ENCODE measurements at regions of chr9 and their contacts with region 1.

Region 1: GRCh38 chr9:19174127-19174912 is 47.0 kb upstream of the PLIN2 start:
- DNase-seq: peak; percentile 64
- ATAC-seq: peak; percentile 99
- H3K4me3 ChIP-seq: no peak overlapping the region
- H3K27ac ChIP-seq: no peak overlapping the region
- H3K4me1 ChIP-seq: no peaks in the 10 kb centered on the region
- H3K27me3 ChIP-seq: no peaks in the 10 kb centered on the region
- CTCF ChIP-seq: peak; percentile 50 to 66 (median 51); a peak in 5 of 6 replicates
- EP300 ChIP-seq: no peak
- POLR2A ChIP-seq: no peak
- RAD21 ChIP-seq: peak; percentile 77

Region 2: GRCh38 chr9:18255158-18255629 is 919.1 kb before region 1 on chr9:
- CTCF ChIA-PET with region 1: interaction called, 5 read pairs
- POLR2A ChIA-PET with region 1: no interaction called
- RAD21 ChIA-PET with region 1: interaction called, 4 read pairs
- SMC1A ChIA-PET with region 1: interaction called, 13 read pairs
- in situ Hi-C with region 1: loop called (anchors 25 kb)
- intact Hi-C with region 1: loop called (anchors 10 kb)
- DNase-seq: peak; percentile 9
- ATAC-seq: peak; percentile 96
- H3K4me3 ChIP-seq: no peak overlapping the region
- H3K27ac ChIP-seq: no peak overlapping the region
- H3K4me1 ChIP-seq: no peaks in the 10 kb centered on the region
- H3K27me3 ChIP-seq: no peaks in the 10 kb centered on the region
- CTCF ChIP-seq: peak; percentile 80 to 92 (median 88)
- EP300 ChIP-seq: no peak
- POLR2A ChIP-seq: no peak
- RAD21 ChIP-seq: peak; percentile 96

Region 3: DNA sequence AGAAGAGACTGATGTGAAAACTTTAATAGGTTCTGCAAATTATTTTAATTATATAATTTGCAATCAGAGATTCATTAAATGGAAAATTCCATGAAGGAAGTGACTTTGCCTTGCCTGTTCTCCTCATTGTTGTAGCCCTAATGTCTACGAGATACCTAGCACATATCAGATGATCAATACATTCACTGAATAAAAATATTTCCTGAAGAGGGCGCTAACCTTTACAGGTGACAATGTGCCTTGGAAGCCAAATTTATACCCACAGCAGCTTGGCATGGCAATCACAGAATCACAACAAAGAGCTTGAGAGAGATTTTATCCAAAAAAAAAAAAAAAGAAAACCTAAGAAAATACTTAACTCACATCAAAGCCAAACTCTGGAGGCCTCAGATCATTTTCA is 89.0 kb before region 1 on chr9:
- CTCF ChIA-PET with region 1: interaction called, 113 read pairs
- POLR2A ChIA-PET with region 1: interaction called, 9 read pairs
- RAD21 ChIA-PET with region 1: interaction called, 71 read pairs
- SMC1A ChIA-PET with region 1: interaction called, 61 read pairs
- in situ Hi-C with region 1: loop called (anchors 10 kb)
- intact Hi-C with region 1: loop called (anchors 1 kb)
- DNase-seq: no peak
- ATAC-seq: peak; percentile 88
- H3K4me3 ChIP-seq: no peak overlapping the region
- H3K27ac ChIP-seq: no peak overlapping the region
- H3K4me1 ChIP-seq: no peaks in the 10 kb centered on the region
- H3K27me3 ChIP-seq: no peaks in the 10 kb centered on the region
- CTCF ChIP-seq: peak; percentile 33 to 47 (median 35); a peak in 3 of 6 replicates
- EP300 ChIP-seq: no peak
- POLR2A ChIP-seq: no peak
- RAD21 ChIP-seq: peak; percentile 47

Region 4: DNA sequence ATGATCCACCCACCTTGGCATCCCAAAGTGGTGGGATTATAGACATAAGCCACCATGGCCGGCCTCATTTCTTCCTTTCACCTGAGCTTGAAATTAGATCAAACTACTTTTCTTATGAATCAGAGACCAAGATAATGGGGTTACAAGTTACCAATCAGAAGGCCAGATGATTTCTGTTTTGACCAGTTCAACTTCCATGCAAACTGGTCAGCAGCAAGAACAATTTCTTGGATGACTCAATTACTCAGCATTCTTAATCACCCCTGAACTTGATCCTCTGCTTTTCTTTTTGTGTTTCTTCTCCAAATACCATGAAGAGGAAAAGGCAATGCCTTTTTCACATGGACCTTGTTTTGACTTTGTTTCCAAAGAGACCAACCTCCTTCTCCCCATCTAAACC is 37.0 kb before region 1 on chr9:
- CTCF ChIA-PET with region 1: interaction called, 13 read pairs
- POLR2A ChIA-PET with region 1: no interaction called
- RAD21 ChIA-PET with region 1: interaction called, 21 read pairs
- SMC1A ChIA-PET with region 1: interaction called, 9 read pairs
- in situ Hi-C with region 1: no loop called
- intact Hi-C with region 1: no loop called
- DNase-seq: no peak
- ATAC-seq: no peak
- H3K4me3 ChIP-seq: no peak overlapping the region
- H3K27ac ChIP-seq: no peak overlapping the region
- H3K4me1 ChIP-seq: no peaks in the 10 kb centered on the region; the same call in 1 of the 2 replicates
- H3K27me3 ChIP-seq: no peaks in the 10 kb centered on the region
- CTCF ChIP-seq: no peak
- EP300 ChIP-seq: no peak
- POLR2A ChIP-seq: no peak
- RAD21 ChIP-seq: no peak

Region 5: GRCh38 chr9:19184144-19184917 is 10.0 kb after region 1 on chr9:
- CTCF ChIA-PET with region 1: interaction called, 20 read pairs
- POLR2A ChIA-PET with region 1: no interaction called
- RAD21 ChIA-PET with region 1: interaction called, 28 read pairs
- SMC1A ChIA-PET with region 1: interaction called, 11 read pairs
- in situ Hi-C with region 1: no loop called
- intact Hi-C with region 1: no loop called
- DNase-seq: peak; percentile 46
- ATAC-seq: peak; percentile 99
- H3K4me3 ChIP-seq: no peak overlapping the region
- H3K27ac ChIP-seq: peak overlapping the region; percentile 59; the same call in 1 of the 2 replicates
- H3K4me1 ChIP-seq: 0 out of 2 replicates have a peak, but pooled peaks cover 5% of the 10 kb centered on the region
- H3K27me3 ChIP-seq: no peaks in the 10 kb centered on the region
- CTCF ChIP-seq: 0 out of 6 replicates have a peak, but pooled peaks of 1 of the 3 experiments have one; percentile 0
- EP300 ChIP-seq: peak; percentile 72 to 84; a peak in 3 of 4 replicates
- POLR2A ChIP-seq: peak; percentile 37; the same call in 1 of the 2 replicates
- RAD21 ChIP-seq: peak; percentile 19; the same call in 1 of the 2 replicates

Region 6: DNA sequence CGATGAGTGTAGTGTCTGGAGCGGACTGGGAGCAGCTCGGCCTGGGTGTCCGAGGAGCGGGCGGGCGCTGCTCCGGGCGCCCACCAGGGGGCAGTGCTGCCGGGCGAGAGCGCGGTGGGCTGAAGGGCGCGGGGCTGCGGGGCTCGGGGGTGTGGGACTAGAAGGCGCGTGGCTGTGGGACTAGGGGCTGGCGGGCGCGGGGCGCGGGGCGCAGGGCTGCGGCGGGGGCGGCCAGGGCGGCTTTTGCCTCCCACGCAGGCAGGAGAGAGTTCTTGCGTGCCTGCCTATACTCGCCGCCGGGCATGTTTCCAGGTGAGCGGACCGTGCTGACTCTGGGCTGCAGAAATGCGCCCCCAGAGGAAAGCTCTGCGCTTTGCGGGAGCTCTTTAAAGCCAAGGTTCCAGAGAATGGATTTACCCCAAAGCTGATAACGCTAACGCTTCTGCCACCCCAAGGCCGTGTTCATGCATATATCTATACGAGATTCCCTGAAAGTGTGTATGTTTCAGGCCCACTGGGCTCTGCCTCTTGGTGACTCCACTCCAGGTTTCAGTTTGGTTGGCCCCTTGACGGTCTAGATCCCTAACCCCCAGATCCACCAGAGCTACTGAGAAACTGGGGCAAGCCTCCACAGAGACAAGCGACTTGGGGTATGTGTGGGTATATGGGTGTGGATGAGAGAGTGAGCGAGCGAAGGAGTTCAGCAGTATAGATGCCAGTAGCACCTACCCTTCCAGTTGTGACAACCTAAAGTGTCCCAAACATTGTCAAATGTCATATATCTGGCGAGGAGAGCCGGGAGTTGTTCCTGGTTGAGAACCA is 290.7 kb after region 1 on chr9:
- CTCF ChIA-PET with region 1: interaction called, 10 read pairs
- POLR2A ChIA-PET with region 1: no interaction called
- RAD21 ChIA-PET with region 1: no interaction called
- SMC1A ChIA-PET with region 1: no interaction called
- in situ Hi-C with region 1: no loop called
- intact Hi-C with region 1: no loop called
- DNase-seq: no peak
- ATAC-seq: peak; percentile 97
- H3K4me3 ChIP-seq: peak overlapping the region; percentile 69; the same call in 1 of the 2 replicates
- H3K27ac ChIP-seq: no peak overlapping the region
- H3K4me1 ChIP-seq: 0 out of 2 replicates have a peak, but pooled peaks cover 3% of the 10 kb centered on the region
- H3K27me3 ChIP-seq: no peaks in the 10 kb centered on the region
- CTCF ChIP-seq: peak; percentile 67 to 73 (median 69)
- EP300 ChIP-seq: no peak
- POLR2A ChIP-seq: no peak
- RAD21 ChIP-seq: 0 out of 2 replicates have a peak, but pooled peaks have one; percentile 16